ENCODE measurements at regions of chr1 and their contacts with region 1.

Region 1: GRCh38 chr1:26161415-26162219 is 2.7 kb downstream of the FAM110D start:
- DNase-seq: peak; percentile 69 to 89 (median 89)
- ATAC-seq: peak; percentile 52 to 54
- H3K4me3 ChIP-seq: peak overlapping the region; percentile 32
- H3K27ac ChIP-seq: peak overlapping the region; percentile 54
- H3K4me1 ChIP-seq: peaks cover 11% of the 10 kb centered on the region
- H3K27me3 ChIP-seq: no peaks in the 10 kb centered on the region

Region 2: GRCh38 chr1:26111530-26112406 is 49.8 kb before region 1 on chr1 and contains the start of gene PDIK1L:
- intact Hi-C with region 1: loop called in 3 of 4 experiments (anchors 5 kb)
- DNase-seq: peak; percentile 94 to 98 (median 97)
- ATAC-seq: peak; percentile 95 to 96
- H3K4me3 ChIP-seq: peak within 1 kb of the TSS; percentile 84
- H3K27ac ChIP-seq: peak within 1 kb of the TSS; percentile 89
- H3K4me1 ChIP-seq: no peaks in the 10 kb centered on the region
- H3K27me3 ChIP-seq: no peaks in the 10 kb centered on the region
- total RNA-seq, gene PDIK1L: 3.7 to 5.2 (median 4.5) TPM

Region 3: DNA sequence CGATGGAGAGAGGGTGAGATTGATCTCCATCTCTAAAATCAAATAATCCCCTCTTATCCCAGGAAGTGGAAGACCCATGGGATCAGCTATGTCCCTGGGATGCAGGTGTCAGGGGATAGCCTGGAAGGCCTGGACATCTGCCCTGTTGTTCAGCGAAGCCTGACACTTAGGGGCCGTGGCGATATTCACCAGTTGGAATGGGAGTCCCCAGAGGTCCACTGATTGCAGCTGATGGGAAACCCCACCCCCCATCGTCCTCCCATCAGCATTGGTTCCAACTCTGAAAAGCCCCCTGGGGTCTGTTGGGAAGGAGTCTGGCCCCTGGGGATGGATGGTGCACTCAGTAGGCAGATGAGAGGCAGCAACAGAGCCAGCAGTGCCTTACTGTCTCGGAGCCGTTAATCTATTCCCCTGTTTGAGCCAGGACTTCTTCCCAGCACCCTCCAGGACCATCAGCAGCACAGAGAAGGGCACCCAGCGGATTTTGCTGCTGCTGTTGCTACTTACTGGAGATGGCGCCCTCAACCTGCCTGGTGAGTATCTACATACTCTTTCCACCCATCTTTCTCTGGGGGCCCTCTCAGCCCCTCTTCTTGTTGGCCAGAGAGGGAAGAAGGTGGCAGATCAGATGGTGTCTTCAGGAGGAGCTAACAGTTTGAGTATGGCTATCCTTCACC is 42.2 kb after region 1 on chr1:
- intact Hi-C with region 1: no loop called
- DNase-seq: no peak
- ATAC-seq: no peak
- H3K4me3 ChIP-seq: no peak overlapping the region
- H3K27ac ChIP-seq: no peak overlapping the region
- H3K4me1 ChIP-seq: peaks cover 3% of the 10 kb centered on the region
- H3K27me3 ChIP-seq: no peaks in the 10 kb centered on the region

Measured in right cardiac atrium (tissue), 5 donors.